ENCODE measurements at regions of chr20 and their contacts with region 1.

Region 1: DNA sequence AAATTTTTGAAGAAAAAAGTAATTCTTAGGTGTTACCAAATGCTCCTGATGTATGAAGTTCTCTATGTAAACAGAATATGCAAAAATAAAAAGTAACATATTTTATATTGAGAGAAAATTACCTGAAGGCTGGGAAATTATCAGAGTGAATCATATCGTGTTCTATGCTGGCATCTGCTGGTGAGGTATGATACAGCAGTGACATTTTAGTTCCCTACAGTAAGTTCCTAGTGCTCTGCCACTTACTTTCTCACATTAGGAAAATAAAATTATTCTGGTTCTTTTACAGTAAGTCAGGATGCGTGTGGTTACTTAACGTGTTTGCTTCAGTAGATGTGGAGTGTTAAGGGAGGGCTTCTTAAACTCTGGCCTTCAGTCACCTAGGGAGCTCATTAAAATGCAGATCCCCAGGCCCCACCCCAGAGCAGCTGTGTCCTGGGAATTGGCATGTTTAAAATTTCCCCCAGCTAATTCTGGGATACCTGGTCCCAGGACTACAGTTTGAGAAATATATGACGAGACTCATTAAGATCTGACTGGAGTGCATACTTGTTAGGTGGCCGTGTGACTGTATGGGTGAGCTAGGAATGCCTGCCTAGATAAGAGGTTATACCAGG is 3.2 kb downstream of the ACTR5 start:
- DNase-seq: peak in 1 of 5 donors; percentile 39
- H3K4me3 ChIP-seq: no peak overlapping the region
- H3K4me3 Mint-ChIP-seq: peak overlapping the region in 1 of 7 donors; percentile 43
- H3K27ac ChIP-seq: no peak overlapping the region
- H3K27ac Mint-ChIP-seq: peak overlapping the region in 3 of 8 donors; percentile 45 to 60 (median 58)
- H3K4me1 ChIP-seq: peaks cover 19% of the 10 kb centered on the region
- H3K4me1 Mint-ChIP-seq: peaks cover 18 to 35% (median 28%) of the 10 kb centered on the region in 3 donors
- H3K27me3 ChIP-seq: no peaks in the 10 kb centered on the region
- H3K27me3 Mint-ChIP-seq: no peaks in the 10 kb centered on the region

Region 2: GRCh38 chr20:38645980-38646858 is 105.2 kb before region 1 on chr20:
- CTCF ChIA-PET with region 1: interaction called, 11 read pairs
- POLR2A ChIA-PET with region 1: no interaction called
- DNase-seq: peak; percentile 85 to 91 (median 87)
- H3K4me3 ChIP-seq: peak overlapping the region; percentile 40
- H3K4me3 Mint-ChIP-seq: peak overlapping the region; percentile 34 to 90 (median 78)
- H3K27ac ChIP-seq: no peak overlapping the region
- H3K27ac Mint-ChIP-seq: peak overlapping the region in 6 of 8 donors; percentile 11 to 85 (median 50)
- H3K4me1 ChIP-seq: peaks cover 5% of the 10 kb centered on the region
- H3K4me1 Mint-ChIP-seq: peaks cover 8 to 13% (median 8%) of the 10 kb centered on the region in 3 donors
- H3K27me3 ChIP-seq: peaks cover 25% of the 10 kb centered on the region
- H3K27me3 Mint-ChIP-seq: peaks cover 35 to 53% of the 10 kb centered on the region in 2 donors

Region 3: DNA sequence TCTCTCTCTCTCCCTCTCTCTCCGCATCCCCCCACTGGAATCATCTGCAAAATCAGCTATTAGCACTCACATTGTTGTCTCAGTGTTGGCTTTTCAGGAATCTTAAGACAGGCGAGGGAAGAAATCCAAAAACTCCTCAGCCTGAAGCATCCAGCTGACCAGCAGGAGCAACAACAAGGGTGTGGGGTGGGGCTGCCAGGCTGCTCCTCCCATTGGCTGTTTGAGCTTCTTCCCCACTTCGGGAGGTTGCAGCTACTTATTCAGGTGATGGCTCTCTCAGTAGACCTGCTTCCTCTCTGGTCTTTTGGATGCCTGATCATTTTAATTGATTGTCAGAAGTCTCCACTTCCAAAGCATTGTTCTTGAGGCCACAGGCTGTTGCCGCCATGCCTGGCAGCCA is 51.3 kb before region 1 on chr20:
- CTCF ChIA-PET with region 1: no interaction called
- POLR2A ChIA-PET with region 1: no interaction called
- DNase-seq: no peak
- H3K4me3 ChIP-seq: no peak overlapping the region
- H3K4me3 Mint-ChIP-seq: no peak overlapping the region
- H3K27ac ChIP-seq: no peak overlapping the region
- H3K27ac Mint-ChIP-seq: no peak overlapping the region
- H3K4me1 ChIP-seq: no peaks in the 10 kb centered on the region
- H3K4me1 Mint-ChIP-seq: no peaks in the 10 kb centered on the region
- H3K27me3 ChIP-seq: peaks cover 13% of the 10 kb centered on the region
- H3K27me3 Mint-ChIP-seq: peaks cover 22 to 44% of the 10 kb centered on the region in 2 donors

Region 4: GRCh38 chr20:38714308-38714707 is 37.2 kb before region 1 on chr20:
- CTCF ChIA-PET with region 1: no interaction called
- POLR2A ChIA-PET with region 1: no interaction called
- DNase-seq: no peak
- H3K4me3 ChIP-seq: no peak overlapping the region
- H3K4me3 Mint-ChIP-seq: no peak overlapping the region
- H3K27ac ChIP-seq: no peak overlapping the region
- H3K27ac Mint-ChIP-seq: no peak overlapping the region
- H3K4me1 ChIP-seq: no peaks in the 10 kb centered on the region
- H3K4me1 Mint-ChIP-seq: no peaks in the 10 kb centered on the region
- H3K27me3 ChIP-seq: peaks cover 10% of the 10 kb centered on the region
- H3K27me3 Mint-ChIP-seq: peaks cover 38 to 62% of the 10 kb centered on the region in 2 donors

Measured in CD8-positive, alpha-beta memory T cell (primary cell).